Heart right ventricle (tissue), 16 donors: ENCODE measurements at regions of chr10 and their contacts with region 1.

Region 1: DNA sequence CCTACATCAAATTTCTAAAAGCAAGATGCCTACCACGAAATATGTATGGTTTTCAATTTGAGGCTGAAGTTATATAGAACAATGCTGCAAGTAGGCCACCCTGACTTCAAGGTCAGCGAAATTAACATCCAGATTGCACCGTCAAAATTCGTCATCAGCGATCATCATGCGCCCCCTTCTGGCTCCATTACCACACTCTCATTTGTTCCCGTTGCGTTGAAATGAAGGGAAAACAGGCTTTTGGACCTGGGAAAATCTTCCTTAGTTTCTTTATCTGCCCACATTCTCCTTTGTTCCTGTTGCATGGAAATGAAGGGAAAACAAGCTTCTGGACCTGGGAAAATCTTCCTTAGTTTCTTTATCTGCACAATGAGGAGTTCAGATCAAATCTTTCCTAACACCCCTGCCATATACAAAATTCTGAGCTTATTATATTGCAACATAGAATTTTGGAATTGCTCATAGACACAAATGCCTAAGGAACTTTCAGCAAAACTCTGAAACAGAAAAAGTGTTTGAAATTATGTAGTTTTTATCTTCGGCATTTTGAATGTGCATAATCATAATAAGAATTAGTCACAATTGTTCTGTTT is 98.2 kb upstream of the PRKCQ start:
- DNase-seq: peak; percentile 27 to 44
- ATAC-seq: peak in 2 of 8 donors; percentile 41 to 56
- H3K4me3 ChIP-seq: no peak overlapping the region
- H3K27ac ChIP-seq: no peak overlapping the region
- H3K4me1 ChIP-seq: peaks cover 0 to 12% (median 0%) of the 10 kb centered on the region in 9 donors
- H3K27me3 ChIP-seq: peaks cover 0 to 26% (median 5%) of the 10 kb centered on the region in 7 donors
- CTCF ChIP-seq: peak; percentile 36 to 79 (median 68)

Region 2: GRCh38 chr10:6416892-6417512 is 261.3 kb before region 1 on chr10:
- intact Hi-C with region 1: loop called in 3 of 10 experiments (anchors 5 to 10 kb)
- DNase-seq: no peak
- ATAC-seq: peak in 4 of 8 donors; percentile 41 to 70 (median 50)
- H3K4me3 ChIP-seq: no peak overlapping the region
- H3K27ac ChIP-seq: no peak overlapping the region
- H3K4me1 ChIP-seq: no peaks in the 10 kb centered on the region
- H3K27me3 ChIP-seq: peaks cover 0 to 8% (median 0%) of the 10 kb centered on the region in 7 donors
- CTCF ChIP-seq: peak in 8 of 9 donors; percentile 33 to 73 (median 65)

Region 3: DNA sequence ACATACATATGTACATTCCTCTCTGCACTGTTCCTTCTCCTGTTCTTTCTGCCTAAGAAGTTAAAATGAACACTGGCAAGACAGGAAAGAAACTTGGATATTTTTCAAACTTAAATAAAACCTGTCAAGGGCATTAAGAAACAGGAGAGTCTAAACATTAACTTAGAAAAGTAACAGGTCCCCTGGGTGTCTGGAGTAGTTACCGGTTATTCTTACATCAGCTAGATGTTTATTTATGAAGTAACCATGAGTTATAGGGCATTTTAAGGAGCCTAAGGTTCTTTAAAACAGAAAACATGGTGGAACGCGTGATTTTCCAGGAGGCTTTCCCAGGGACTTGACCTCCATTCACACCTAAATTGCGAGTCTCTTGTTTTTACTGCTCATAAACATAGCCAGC is 246.4 kb before region 1 on chr10:
- intact Hi-C with region 1: loop called in 1 of 10 experiments (anchors 5 kb)
- DNase-seq: no peak
- ATAC-seq: no peak
- H3K4me3 ChIP-seq: no peak overlapping the region
- H3K27ac ChIP-seq: no peak overlapping the region
- H3K4me1 ChIP-seq: no peaks in the 10 kb centered on the region
- H3K27me3 ChIP-seq: peaks cover 0 to 6% (median 0%) of the 10 kb centered on the region in 7 donors
- CTCF ChIP-seq: no peak

Region 4: DNA sequence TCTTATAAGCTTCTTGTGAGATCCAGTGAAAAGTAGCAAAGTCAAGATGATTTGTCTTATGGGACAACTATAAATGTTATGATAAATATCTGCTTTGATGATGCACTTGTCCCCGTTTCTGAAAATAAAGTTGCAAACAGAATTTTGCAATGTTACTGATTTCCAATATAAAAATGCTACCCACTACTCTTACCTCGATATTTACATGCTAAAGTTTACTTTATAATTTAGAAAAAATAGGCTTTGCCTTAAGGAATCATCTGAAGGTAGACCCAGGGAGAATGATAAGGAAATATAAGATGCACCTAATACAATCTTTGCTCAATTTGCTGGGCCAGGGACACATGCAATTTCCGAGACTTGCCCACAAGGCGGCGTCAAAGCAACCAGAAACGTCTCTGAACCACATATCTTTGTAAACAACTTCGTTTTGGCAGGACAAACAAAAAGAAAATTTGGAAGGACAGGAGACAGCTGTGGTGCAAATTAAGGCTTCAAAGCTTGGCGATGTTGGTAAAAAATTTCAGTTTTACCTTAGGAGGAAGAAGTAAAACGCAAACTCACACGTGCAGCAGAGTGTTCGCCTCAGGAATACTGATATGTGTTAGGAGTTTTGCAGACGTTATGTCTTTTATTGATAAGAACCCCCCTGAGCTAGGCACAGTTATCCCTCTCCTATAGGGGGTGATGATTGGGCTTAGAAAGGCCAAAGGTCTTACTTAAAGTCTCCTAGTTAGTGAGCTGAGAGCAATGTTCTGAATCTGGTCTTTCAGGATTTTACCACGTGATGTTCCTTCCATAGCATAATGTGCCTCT is 232.6 kb before region 1 on chr10:
- intact Hi-C with region 1: loop called in 1 of 10 experiments (anchors 10 kb)
- DNase-seq: peak; percentile 20 to 35
- ATAC-seq: no peak
- H3K4me3 ChIP-seq: peak overlapping the region in 3 of 10 donors; percentile 13 to 16 (median 14)
- H3K27ac ChIP-seq: no peak overlapping the region
- H3K4me1 ChIP-seq: peaks cover 0 to 4% (median 0%) of the 10 kb centered on the region in 9 donors
- H3K27me3 ChIP-seq: no peaks in the 10 kb centered on the region
- CTCF ChIP-seq: peak in 8 of 9 donors; percentile 14 to 67 (median 51)

Region 5: GRCh38 chr10:6530211-6530840 is 148.0 kb before region 1 on chr10:
- intact Hi-C with region 1: no loop called
- DNase-seq: peak in 1 of 2 donors; percentile 13
- ATAC-seq: peak in 1 of 8 donors; percentile 38
- H3K4me3 ChIP-seq: no peak overlapping the region
- H3K27ac ChIP-seq: peak overlapping the region in 1 of 10 donors; percentile 71
- H3K4me1 ChIP-seq: no peaks in the 10 kb centered on the region
- H3K27me3 ChIP-seq: peaks cover 0 to 17% (median 5%) of the 10 kb centered on the region in 7 donors
- CTCF ChIP-seq: no peak

Region 6: GRCh38 chr10:6580279-6581029 is 97.9 kb before region 1 on chr10:
- intact Hi-C with region 1: loop called in 4 of 10 experiments (anchors 5 to 10 kb)
- DNase-seq: peak; percentile 33 to 74
- ATAC-seq: peak; percentile 57 to 93 (median 86)
- H3K4me3 ChIP-seq: peak overlapping the region in 9 of 10 donors; percentile 44 to 73 (median 52)
- H3K27ac ChIP-seq: peak overlapping the region in 2 of 10 donors; percentile 25 to 90
- H3K4me1 ChIP-seq: peaks cover 0 to 23% (median 4%) of the 10 kb centered on the region in 9 donors
- H3K27me3 ChIP-seq: peaks cover 0 to 74% (median 39%) of the 10 kb centered on the region in 7 donors
- CTCF ChIP-seq: peak; percentile 36 to 69 (median 48)